ENCODE measurements at regions of chr9 and their contacts with region 1.

Region 1: GRCh38 chr9:116646661-116647512 is 40.2 kb upstream of the TRIM32 start:
- DNase-seq: no peak
- ATAC-seq: peak; percentile 62 to 87 (median 82)
- H3K4me3 ChIP-seq: no peak overlapping the region
- H3K27ac ChIP-seq: peak overlapping the region in 1 of 12 donors; percentile 66
- H3K4me1 ChIP-seq: peaks cover 0 to 39% (median 7%) of the 10 kb centered on the region in 12 donors
- H3K27me3 ChIP-seq: no peaks in the 10 kb centered on the region
- CTCF ChIP-seq: peak; percentile 35 to 69 (median 58)
- POLR2A ChIP-seq: no peak

Region 2: GRCh38 chr9:116156621-116157314 is 490.1 kb before region 1 on chr9:
- intact Hi-C with region 1: loop called in 6 of 10 experiments (anchors 5 to 10 kb)
- DNase-seq: peak; percentile 80 to 90 (median 81)
- ATAC-seq: peak; percentile 92 to 97 (median 94)
- H3K4me3 ChIP-seq: peak overlapping the region in 10 of 12 donors; percentile 11 to 75 (median 50)
- H3K27ac ChIP-seq: peak overlapping the region; percentile 65 to 97 (median 84)
- H3K4me1 ChIP-seq: peaks cover 0 to 36% (median 6%) of the 10 kb centered on the region in 12 donors
- H3K27me3 ChIP-seq: peaks cover 0 to 46% (median 4%) of the 10 kb centered on the region in 9 donors
- CTCF ChIP-seq: peak in 1 of 12 donors; percentile 1
- POLR2A ChIP-seq: peak in 1 of 2 donors; percentile 39

Region 3: DNA sequence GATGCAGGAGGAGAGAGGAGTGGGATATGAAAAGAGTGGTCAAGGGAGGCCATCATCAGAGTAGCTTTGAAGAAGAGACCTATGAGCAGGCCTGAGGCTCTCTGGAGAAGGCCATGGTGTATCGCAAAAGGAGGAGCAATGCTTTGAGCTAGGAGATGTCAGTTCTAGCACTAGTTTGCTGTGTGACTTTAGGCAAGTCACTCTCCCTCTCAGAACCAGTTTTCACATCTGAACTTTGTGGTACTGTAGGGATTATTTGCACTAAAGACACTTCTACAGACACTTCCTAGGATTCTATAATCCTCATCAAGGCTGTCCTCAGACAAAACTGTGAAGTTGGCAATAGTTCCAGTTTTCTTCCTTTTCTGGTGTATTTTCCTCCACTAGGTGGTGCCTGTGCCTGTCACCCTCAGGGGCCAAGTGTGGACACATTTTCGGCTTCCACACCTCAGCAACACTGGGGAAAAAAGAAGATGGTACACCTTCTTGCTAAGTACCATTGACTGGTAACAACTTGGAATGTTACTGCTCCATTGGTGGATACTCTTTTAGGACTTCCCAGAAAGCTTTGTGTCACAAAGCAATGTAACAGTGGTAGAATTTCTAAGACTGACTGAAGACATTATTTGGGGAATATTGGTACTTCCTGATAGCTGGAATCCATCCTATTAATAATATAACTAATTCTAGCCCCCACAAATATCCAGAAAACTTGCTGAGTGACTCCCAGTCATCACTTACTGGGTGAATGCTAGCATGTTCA is 483.4 kb before region 1 on chr9:
- intact Hi-C with region 1: loop called in 4 of 10 experiments (anchors 5 to 10 kb)
- DNase-seq: no peak
- ATAC-seq: peak in 1 of 4 donors; percentile 41
- H3K4me3 ChIP-seq: no peak overlapping the region
- H3K27ac ChIP-seq: no peak overlapping the region
- H3K4me1 ChIP-seq: peaks cover 0 to 15% (median 0%) of the 10 kb centered on the region in 12 donors
- H3K27me3 ChIP-seq: no peaks in the 10 kb centered on the region
- CTCF ChIP-seq: peak; percentile 17 to 56 (median 34)
- POLR2A ChIP-seq: no peak

Region 4: GRCh38 chr9:116589392-116590354 is 57.2 kb before region 1 on chr9:
- intact Hi-C with region 1: loop called in 1 of 10 experiments (anchors 10 kb)
- DNase-seq: no peak
- ATAC-seq: no peak
- H3K4me3 ChIP-seq: no peak overlapping the region
- H3K27ac ChIP-seq: no peak overlapping the region
- H3K4me1 ChIP-seq: peaks cover 0 to 4% (median 0%) of the 10 kb centered on the region in 12 donors
- H3K27me3 ChIP-seq: no peaks in the 10 kb centered on the region
- CTCF ChIP-seq: peak in 9 of 12 donors; percentile 14 to 36 (median 25)
- POLR2A ChIP-seq: no peak

Region 5: GRCh38 chr9:117205806-117206205 is 558.9 kb after region 1 on chr9:
- intact Hi-C with region 1: no loop called
- DNase-seq: no peak
- ATAC-seq: no peak
- H3K4me3 ChIP-seq: no peak overlapping the region
- H3K27ac ChIP-seq: no peak overlapping the region
- H3K4me1 ChIP-seq: no peaks in the 10 kb centered on the region
- H3K27me3 ChIP-seq: no peaks in the 10 kb centered on the region
- CTCF ChIP-seq: no peak
- POLR2A ChIP-seq: no peak

Measured in heart left ventricle (tissue), 16 donors.